SK-MEL-5 (cell line): ENCODE measurements at regions of chr7 and their contacts with region 1.

Region 1: DNA sequence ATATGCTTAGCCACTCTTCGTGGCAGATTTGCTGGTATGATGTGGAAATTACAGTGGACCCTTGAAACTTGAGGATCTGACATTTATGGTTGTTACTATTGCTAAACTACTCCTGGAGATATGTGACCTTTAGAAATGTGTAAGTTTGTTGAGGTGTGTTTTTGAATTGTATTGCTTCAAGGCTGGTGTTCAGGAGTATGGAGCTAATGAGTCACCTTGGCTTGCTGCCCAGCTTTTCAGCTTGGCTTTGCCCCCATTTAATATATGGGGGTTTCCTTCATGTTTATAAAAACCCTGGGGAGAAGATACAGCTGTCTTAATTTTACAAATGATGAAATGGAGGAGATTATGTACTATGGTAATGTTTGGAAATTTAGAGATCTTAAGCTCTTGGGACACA is 11.6 kb downstream of the HBP1 start:
- DNase-seq: no peak

Region 2: GRCh38 chr7:106598663-106599342 is 581.6 kb before region 1 on chr7:
- in situ Hi-C with region 1: no loop called
- DNase-seq: peak; percentile 99

Region 3: DNA sequence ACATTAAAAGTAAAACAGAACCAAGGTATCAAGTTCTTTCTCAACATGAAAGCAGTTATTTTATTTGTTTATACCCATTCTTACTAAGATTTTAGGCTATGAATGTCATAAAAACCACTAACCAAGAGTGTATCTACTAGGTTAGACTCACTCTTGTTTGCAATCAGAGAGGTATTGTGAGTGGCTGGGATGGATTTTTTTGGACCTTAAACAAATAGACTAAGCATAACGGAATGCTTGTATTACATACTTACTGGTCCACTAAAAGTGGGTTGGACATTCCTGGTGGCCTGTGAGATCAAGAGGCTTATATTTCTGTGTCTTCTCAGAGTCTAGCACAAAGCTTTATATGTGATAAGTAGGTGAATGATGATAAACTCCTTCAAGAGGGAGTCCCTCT is 530.9 kb after region 1 on chr7:
- in situ Hi-C with region 1: loop called (anchors 25 kb)
- DNase-seq: no peak